ENCODE measurements at regions of chr6 and their contacts with region 1.

Region 1: DNA sequence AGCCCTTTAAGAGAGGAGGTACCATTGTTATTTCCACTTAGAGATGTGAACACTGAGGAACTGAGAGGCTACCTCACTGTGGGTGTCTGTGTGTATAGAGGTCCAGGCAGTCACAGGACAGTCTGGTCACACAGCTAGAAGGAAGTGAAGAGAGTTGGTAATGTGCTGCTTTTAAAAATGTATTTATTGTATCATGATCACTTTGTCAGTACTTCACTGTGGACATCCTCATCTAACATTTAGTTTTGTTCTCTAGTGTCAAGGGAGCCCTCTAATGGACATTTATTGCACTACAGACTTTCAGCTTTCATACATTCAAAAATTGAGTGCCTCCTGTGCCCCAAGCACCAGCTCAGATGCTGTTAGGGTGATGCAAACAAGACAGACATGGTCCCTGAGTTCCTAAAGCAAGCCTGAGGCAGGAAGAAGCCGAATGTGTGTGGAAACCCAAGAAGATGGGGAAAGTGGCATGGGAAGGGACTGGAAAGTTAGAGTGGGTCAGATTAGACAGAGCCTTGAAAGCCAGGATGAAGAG is 123.0 kb downstream of the SLC16A10 start:
- DNase-seq: no peak
- H3K4me3 ChIP-seq: no peak overlapping the region
- H3K27ac ChIP-seq: no peak overlapping the region
- H3K4me1 ChIP-seq: peaks cover 0 to 9% (median 0%) of the 10 kb centered on the region in 4 donors
- H3K27me3 ChIP-seq: no peaks in the 10 kb centered on the region
- CTCF ChIP-seq: peak; percentile 59 to 74

Region 2: GRCh38 chr6:111011360-111012142 is 198.7 kb before region 1 on chr6:
- intact Hi-C with region 1: loop called (anchors 2 kb)
- DNase-seq: no peak
- H3K4me3 ChIP-seq: no peak overlapping the region
- H3K27ac ChIP-seq: no peak overlapping the region
- H3K4me1 ChIP-seq: peaks cover 0 to 14% (median 0%) of the 10 kb centered on the region in 4 donors
- H3K27me3 ChIP-seq: no peaks in the 10 kb centered on the region
- CTCF ChIP-seq: peak; percentile 40 to 60

Region 3: GRCh38 chr6:111113336-111114086 is 96.8 kb before region 1 on chr6:
- intact Hi-C with region 1: no loop called
- DNase-seq: peak in 1 of 2 donors; percentile 37
- H3K4me3 ChIP-seq: no peak overlapping the region
- H3K27ac ChIP-seq: no peak overlapping the region
- H3K4me1 ChIP-seq: no peaks in the 10 kb centered on the region
- H3K27me3 ChIP-seq: no peaks in the 10 kb centered on the region
- CTCF ChIP-seq: no peak

Region 4: DNA sequence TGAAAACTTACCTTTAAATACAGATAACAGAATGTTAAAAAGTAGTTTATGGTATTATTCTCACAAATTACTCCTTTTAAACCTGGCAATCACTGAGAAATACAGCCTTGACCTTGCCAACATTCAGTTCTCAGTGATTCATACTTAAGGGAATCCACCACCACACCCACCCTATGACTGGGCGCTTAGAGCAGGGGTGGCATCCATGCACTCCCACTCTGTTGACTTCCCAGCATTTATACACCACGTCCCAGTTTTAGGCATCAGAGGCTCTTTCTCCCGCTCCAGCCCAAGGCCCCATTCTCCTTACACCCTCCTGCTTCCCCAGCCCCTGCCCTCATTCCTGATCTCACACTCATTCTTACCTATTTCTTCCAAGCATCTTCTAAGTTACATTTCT is 379.1 kb after region 1 on chr6:
- intact Hi-C with region 1: no loop called
- DNase-seq: peak; percentile 81 to 87
- H3K4me3 ChIP-seq: no peak overlapping the region
- H3K27ac ChIP-seq: peak overlapping the region; percentile 84 to 85
- H3K4me1 ChIP-seq: peaks cover 0 to 92% (median 71%) of the 10 kb centered on the region in 4 donors
- H3K27me3 ChIP-seq: no peaks in the 10 kb centered on the region
- CTCF ChIP-seq: no peak

Measured in tibial artery (tissue), 4 donors.